CD4-positive, alpha-beta memory T cell (primary cell): ENCODE measurements at regions of chr10 and their contacts with region 1.

Region 1: GRCh38 chr10:109934958-109935706 is 11.8 kb upstream of the XPNPEP1 start:
- DNase-seq: peak; percentile 24 to 46 (median 44)
- H3K4me3 ChIP-seq: peak overlapping the region in 1 of 2 donors; percentile 26
- H3K4me3 Mint-ChIP-seq: peak overlapping the region; percentile 74 to 95 (median 88)
- H3K27ac ChIP-seq: peak overlapping the region; percentile 37
- H3K27ac Mint-ChIP-seq: peak overlapping the region; percentile 90 to 98 (median 97)
- H3K4me1 ChIP-seq: peaks cover 71% of the 10 kb centered on the region
- H3K4me1 Mint-ChIP-seq: peaks cover 47 to 80% (median 63%) of the 10 kb centered on the region in 4 donors
- H3K27me3 ChIP-seq: no peaks in the 10 kb centered on the region
- H3K27me3 Mint-ChIP-seq: no peaks in the 10 kb centered on the region

Region 2: GRCh38 chr10:109823196-109823595 is 111.9 kb before region 1 on chr10:
- CTCF ChIA-PET with region 1: no interaction called
- POLR2A ChIA-PET with region 1: no interaction called
- intact Hi-C with region 1: no loop called
- DNase-seq: no peak
- H3K4me3 ChIP-seq: no peak overlapping the region
- H3K4me3 Mint-ChIP-seq: no peak overlapping the region
- H3K27ac ChIP-seq: no peak overlapping the region
- H3K27ac Mint-ChIP-seq: no peak overlapping the region
- H3K4me1 ChIP-seq: no peaks in the 10 kb centered on the region
- H3K4me1 Mint-ChIP-seq: no peaks in the 10 kb centered on the region
- H3K27me3 ChIP-seq: no peaks in the 10 kb centered on the region
- H3K27me3 Mint-ChIP-seq: peaks cover 5 to 21% of the 10 kb centered on the region in 2 donors

Region 3: DNA sequence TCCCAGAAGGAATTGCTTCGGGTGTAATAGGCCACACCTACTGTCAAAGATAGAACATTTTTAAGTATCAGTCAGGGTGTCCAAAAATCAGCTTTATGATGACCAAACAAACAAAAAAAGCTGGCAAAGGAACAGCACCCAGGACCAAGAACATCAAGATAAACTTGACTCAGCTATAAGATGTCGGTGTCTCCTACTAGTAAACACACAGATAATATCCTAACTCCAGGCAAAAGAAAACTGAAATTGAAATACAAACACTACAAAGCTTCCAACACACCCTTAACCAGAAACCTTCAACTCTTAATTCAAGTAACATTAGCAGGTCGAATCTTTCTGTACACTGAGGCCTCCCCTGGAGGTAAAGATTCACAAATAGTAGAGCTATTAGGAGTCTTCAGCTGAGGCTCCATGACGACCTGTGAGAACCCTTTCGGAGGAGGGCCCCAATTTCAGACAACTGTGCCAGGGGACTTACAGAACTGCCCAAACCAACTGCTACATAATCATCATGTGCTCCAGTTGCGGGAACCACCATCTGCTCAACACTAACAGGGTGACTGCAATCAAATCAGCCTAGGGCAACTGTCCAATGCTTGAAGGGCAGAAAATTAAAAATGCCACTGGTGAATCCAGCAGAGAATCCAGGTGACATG is 32.1 kb before region 1 on chr10:
- CTCF ChIA-PET with region 1: interaction called, 9 read pairs
- POLR2A ChIA-PET with region 1: interaction called, 18 read pairs
- intact Hi-C with region 1: no loop called
- DNase-seq: peak in 3 of 5 donors; percentile 26 to 56 (median 39)
- H3K4me3 ChIP-seq: peak overlapping the region in 1 of 2 donors; percentile 13
- H3K4me3 Mint-ChIP-seq: peak overlapping the region in 7 of 8 donors; percentile 57 to 88 (median 79)
- H3K27ac ChIP-seq: no peak overlapping the region
- H3K27ac Mint-ChIP-seq: peak overlapping the region; percentile 73 to 95 (median 89)
- H3K4me1 ChIP-seq: peaks cover 35% of the 10 kb centered on the region
- H3K4me1 Mint-ChIP-seq: peaks cover 38 to 82% (median 68%) of the 10 kb centered on the region in 4 donors
- H3K27me3 ChIP-seq: no peaks in the 10 kb centered on the region
- H3K27me3 Mint-ChIP-seq: no peaks in the 10 kb centered on the region

Region 4: DNA sequence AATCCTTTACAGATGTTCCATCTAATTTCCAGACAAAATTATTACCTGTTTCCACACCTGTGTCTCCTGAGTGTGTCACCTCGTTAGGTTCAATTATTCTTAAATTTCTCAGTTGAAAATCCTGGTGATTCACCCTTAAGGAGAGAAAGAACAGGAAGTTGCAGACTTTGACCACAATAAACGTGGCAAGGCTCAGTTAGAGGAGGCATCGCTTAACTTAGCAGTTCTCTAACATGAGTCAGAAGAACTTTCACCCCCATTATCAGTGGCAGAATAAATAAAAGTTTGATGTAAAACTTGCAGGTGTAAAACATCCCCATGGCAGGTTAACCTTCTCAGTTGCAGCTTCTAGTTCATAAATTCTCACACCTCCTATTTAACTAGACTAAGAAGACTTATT is 20.2 kb before region 1 on chr10:
- CTCF ChIA-PET with region 1: interaction called, 7 read pairs
- POLR2A ChIA-PET with region 1: interaction called, 53 read pairs
- intact Hi-C with region 1: no loop called
- DNase-seq: peak; percentile 56 to 84 (median 60)
- H3K4me3 ChIP-seq: peak overlapping the region in 1 of 2 donors; percentile 15
- H3K4me3 Mint-ChIP-seq: peak overlapping the region in 7 of 8 donors; percentile 29 to 80 (median 72)
- H3K27ac ChIP-seq: peak overlapping the region; percentile 29
- H3K27ac Mint-ChIP-seq: peak overlapping the region; percentile 32 to 94 (median 77)
- H3K4me1 ChIP-seq: peaks cover 81% of the 10 kb centered on the region
- H3K4me1 Mint-ChIP-seq: peaks cover 58 to 95% (median 75%) of the 10 kb centered on the region in 4 donors
- H3K27me3 ChIP-seq: no peaks in the 10 kb centered on the region
- H3K27me3 Mint-ChIP-seq: no peaks in the 10 kb centered on the region

Region 5: DNA sequence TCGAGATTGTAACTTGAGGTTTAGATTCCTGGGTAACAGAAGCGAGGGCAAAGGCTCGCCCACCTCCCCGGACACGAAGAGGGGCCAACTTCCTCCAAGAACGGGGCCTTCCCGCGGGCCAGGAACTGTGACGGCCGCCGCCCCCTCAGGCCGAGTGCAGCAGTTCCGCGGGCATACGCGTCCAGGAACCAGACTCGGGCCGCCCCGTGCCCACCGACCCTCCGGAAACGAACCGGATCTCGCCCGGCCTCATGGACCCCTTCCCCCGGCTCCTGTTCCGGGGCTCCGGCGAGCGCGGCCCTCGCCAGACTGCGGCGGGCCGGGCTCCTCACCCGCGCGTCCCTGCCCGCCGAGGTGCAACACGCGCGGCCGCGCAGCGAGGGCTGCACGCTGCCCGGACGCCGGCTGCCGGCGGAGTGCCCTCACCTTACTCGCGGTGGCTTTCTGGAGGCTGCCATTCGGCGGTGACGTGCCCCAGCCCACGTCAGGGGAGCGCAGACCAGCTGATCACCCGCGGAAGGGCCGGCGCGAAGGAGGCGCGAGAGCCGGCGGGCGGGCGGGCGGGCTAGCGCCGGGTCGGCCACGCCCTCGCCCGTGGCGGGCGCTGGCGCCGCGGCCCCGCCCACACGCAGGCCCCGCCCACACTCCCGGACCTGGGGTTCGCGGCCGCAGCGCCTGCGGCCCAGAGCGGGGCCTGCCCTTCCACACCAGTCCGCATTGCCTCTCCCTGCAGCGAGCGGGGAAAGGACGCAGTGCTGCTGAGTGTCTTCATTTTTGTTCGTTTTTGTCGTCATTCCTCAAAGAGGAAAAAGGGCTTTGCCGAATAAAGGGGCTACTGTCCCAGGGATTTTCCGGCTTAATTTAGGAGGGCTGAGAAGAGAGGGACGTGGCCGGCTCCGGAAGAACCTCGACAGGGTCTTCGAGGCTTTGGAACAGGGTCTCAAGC is 11.9 kb before region 1 on chr10 and contains the start of gene XPNPEP1:
- CTCF ChIA-PET with region 1: interaction called, 3 read pairs
- POLR2A ChIA-PET with region 1: interaction called, 34 read pairs
- intact Hi-C with region 1: loop called (anchors 1 kb)
- DNase-seq: peak; percentile 75 to 83 (median 79)
- H3K4me3 ChIP-seq: peak within 1 kb of the TSS; percentile 68 to 74
- H3K4me3 Mint-ChIP-seq: peak within 1 kb of the TSS; percentile 88 to 95 (median 92)
- H3K27ac ChIP-seq: peak within 1 kb of the TSS; percentile 86
- H3K27ac Mint-ChIP-seq: peak within 1 kb of the TSS; percentile 86 to 98 (median 96)
- H3K4me1 ChIP-seq: peaks cover 54% of the 10 kb centered on the region
- H3K4me1 Mint-ChIP-seq: peaks cover 39 to 57% (median 47%) of the 10 kb centered on the region in 4 donors
- H3K27me3 ChIP-seq: no peaks in the 10 kb centered on the region
- H3K27me3 Mint-ChIP-seq: no peaks in the 10 kb centered on the region
- total RNA-seq, gene XPNPEP1: 59.0 to 63.3 TPM